ENCODE measurements at regions of chr11 and their contacts with region 1.

Region 1: DNA sequence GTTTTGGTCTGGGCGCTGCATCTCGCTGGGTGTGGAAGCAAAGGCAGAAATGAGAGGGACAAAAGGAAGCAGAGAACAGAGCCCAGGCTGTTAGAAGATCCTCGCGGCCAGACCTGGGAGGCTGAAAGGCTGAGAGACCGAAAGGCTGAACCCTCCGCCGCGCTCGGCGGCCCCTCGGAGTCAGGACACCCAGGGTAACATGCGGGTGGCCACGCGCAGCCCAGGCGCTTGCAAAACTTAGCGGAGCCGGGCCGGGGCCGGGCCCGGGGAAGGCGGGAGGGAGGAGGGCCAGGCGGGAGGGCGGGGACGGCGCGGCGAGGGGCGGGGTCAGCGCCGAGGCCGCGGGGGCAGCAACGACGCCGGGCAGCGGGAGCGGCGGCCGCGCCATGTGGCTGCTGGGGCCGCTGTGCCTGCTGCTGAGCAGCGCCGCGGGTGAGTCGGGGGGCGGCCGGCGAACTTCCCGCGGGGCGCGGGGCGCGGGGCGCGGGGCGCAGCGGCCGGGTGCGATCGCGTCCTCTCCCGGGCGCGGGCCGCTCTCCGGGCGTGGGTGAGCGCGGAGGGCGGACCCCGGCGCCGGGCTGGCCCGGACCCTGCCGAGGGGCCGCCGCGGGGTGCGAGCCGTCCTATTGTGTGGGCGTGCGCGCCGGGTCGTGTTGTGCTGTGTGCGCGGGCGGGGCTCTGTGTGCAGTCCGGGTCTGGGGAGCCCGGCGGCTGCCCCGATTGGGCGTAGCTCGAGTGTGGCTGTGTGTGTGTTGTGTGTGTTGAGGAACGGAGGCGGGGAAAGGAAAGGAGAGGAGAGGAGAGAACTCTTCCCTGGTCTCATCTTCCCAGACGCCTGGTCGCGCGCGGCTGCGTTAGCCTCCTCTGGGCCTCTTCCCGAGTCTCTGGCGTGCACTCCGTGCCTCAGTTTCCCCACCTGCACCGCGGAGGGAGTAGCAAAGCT is at the start of gene LDLRAD3:
- DNase-seq: peak; percentile 64 to 74
- H3K4me3 ChIP-seq: peak within 1 kb of the TSS; percentile 69
- H3K27ac ChIP-seq: no peak within 1 kb of the TSS
- H3K4me1 ChIP-seq: peaks cover 28% of the 10 kb centered on the region
- H3K27me3 ChIP-seq: no peaks in the 10 kb centered on the region
- CTCF ChIP-seq: no peak
- total RNA-seq, gene LDLRAD3: 15.9 and 19.5 TPM in 2 replicates

Region 2: GRCh38 chr11:36041988-36042611 is 98.1 kb after region 1 on chr11:
- CTCF ChIA-PET with region 1: no interaction called
- POLR2A ChIA-PET with region 1: no interaction called
- intact Hi-C with region 1: loop called (anchors 5 kb)
- DNase-seq: no peak
- H3K4me3 ChIP-seq: no peak overlapping the region
- H3K27ac ChIP-seq: no peak overlapping the region
- H3K4me1 ChIP-seq: no peaks in the 10 kb centered on the region
- H3K27me3 ChIP-seq: no peaks in the 10 kb centered on the region
- CTCF ChIP-seq: peak; percentile 51; the same call in 1 of the 2 replicates